ENCODE measurements at regions of chr2 and their contacts with region 1.

Region 1: DNA sequence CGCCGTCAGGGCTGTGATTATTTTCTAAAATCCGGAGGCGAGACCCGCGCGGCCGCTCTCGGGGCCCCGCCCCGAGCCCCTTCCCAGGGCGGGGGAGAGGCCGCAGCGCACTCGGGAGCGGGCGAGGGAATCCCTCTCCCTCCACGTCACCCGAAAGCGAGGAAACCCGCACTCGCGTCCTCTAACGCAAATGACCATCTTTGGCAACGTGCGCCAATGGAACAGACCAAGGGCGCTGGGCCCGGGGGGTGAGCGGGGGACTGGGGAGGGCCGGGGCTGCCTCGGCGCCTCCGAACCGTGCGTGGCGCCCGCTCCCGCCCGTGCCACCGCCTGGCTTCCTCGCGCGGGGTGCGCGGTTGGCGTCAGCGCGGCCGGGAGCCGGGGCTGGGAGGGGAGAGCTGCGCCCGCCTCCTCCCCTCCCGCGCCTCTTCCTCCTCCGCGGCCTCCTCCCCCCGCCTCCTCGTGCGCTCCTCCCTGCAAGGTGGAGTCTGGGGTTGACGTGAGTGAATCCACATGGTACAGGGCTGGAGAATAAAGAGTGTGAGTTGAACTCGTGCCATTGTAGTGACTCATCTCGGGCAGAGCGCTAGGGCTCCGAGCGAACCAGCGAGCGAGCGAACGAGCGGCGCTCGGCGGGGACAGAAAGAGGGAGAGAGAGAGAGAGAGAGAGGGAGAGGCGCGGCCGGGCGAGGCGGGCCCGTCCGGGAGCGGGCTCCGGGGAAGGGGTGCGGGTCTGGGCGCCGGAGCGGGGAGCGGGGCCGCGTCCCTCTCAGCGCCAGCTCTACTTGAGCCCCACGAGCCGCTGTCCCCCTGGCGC is at the start of gene FOSL2:
- DNase-seq: peak; percentile 100
- ATAC-seq: peak; percentile 62
- H3K4me3 ChIP-seq: peak within 1 kb of the TSS; percentile 91
- H3K27ac ChIP-seq: peak within 1 kb of the TSS; percentile 93
- H3K4me1 ChIP-seq: peaks cover 12% of the 10 kb centered on the region
- H3K27me3 ChIP-seq: no peaks in the 10 kb centered on the region
- CTCF ChIP-seq: 0 out of 2 replicates have a peak, but pooled peaks have one; percentile 5
- POLR2A ChIP-seq: peak; percentile 41; the same call in 1 of the 2 replicates
- RAD21 ChIP-seq: peak; percentile 30
- total RNA-seq, gene FOSL2: 31.4 and 32.2 TPM in 2 replicates

Region 2: DNA sequence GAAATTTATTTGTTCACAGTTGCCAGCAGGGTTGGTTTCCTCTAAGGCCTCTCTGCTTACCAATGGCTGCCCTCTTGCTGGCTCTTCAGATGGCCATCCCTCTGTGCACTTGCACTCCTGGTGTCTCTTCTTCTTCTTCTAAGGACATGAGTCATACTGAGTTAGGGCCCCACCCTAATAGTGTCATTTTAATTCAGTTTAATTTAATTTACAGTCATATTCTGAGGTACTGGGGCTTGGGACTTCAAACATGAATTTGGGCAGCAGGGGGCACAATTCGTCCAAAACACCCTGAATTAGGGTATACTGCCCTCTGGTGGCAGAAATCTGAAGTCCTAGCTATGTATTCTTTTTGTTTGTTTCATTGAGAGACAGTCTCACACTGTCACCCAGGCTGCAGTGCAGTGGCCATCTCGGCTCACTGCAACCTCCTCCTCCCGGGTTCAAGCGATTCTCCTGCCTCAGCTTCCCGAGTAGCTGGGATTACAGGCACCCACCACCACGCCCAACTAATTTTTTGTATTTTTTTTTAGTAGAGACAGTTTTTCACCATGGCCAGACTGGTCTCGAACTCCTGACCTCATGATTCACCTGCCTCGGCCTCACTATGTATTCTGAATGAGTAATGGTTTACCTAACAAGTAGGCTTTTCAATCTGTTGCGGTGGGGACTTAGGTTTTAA is 709.0 kb before region 1 on chr2:
- CTCF ChIA-PET with region 1: no interaction called
- POLR2A ChIA-PET with region 1: no interaction called
- dilution Hi-C with region 1: no loop called
- in situ Hi-C with region 1: no loop called
- intact Hi-C with region 1: loop called (anchors 1 kb)
- DNase-seq: peak; percentile 90
- ATAC-seq: peak; percentile 69
- H3K4me3 ChIP-seq: no peak overlapping the region
- H3K27ac ChIP-seq: peak overlapping the region; percentile 52; the same call in 1 of the 2 replicates
- H3K4me1 ChIP-seq: peaks cover 10% of the 10 kb centered on the region
- H3K27me3 ChIP-seq: no peaks in the 10 kb centered on the region
- CTCF ChIP-seq: peak; percentile 99
- POLR2A ChIP-seq: no peak
- RAD21 ChIP-seq: peak; percentile 75

Region 3: DNA sequence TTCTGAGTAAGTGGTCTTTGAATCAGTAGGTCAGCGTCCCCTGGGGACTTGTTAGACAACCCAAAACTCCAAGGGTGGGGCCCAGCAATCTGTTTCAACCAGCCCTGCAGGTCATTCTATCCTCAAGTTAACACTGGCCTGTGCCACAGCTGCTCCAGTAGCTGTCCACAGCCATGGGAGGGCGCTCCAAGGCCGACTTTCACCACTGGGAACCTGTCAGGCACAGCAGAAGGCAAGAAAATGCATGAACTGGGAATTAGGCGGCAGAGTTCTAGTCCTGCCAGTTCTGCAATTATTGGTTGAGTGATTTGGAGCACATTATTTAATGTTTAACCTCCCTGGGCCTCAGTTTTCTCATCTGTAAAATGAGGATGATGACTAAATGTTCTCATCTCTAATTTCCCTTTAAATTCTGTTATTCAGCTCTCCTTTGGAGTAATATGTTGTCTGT is 638.3 kb before region 1 on chr2:
- CTCF ChIA-PET with region 1: no interaction called
- POLR2A ChIA-PET with region 1: no interaction called
- dilution Hi-C with region 1: no loop called
- in situ Hi-C with region 1: loop called (anchors 5 kb)
- intact Hi-C with region 1: loop called (anchors 1 kb)
- DNase-seq: peak; percentile 80
- ATAC-seq: peak; percentile 99
- H3K4me3 ChIP-seq: no peak overlapping the region
- H3K27ac ChIP-seq: no peak overlapping the region
- H3K4me1 ChIP-seq: peaks cover 5% of the 10 kb centered on the region
- H3K27me3 ChIP-seq: no peaks in the 10 kb centered on the region
- CTCF ChIP-seq: peak; percentile 96
- POLR2A ChIP-seq: peak; percentile 61
- RAD21 ChIP-seq: peak; percentile 99

Region 4: GRCh38 chr2:27890146-27890923 is 502.2 kb before region 1 on chr2 and contains the starts of genes BABAM2 and RBKS:
- CTCF ChIA-PET with region 1: no interaction called
- POLR2A ChIA-PET with region 1: no interaction called
- dilution Hi-C with region 1: no loop called
- in situ Hi-C with region 1: no loop called
- intact Hi-C with region 1: loop called (anchors 1 kb)
- DNase-seq: peak; percentile 78
- ATAC-seq: peak; percentile 93
- H3K4me3 ChIP-seq: peak within 1 kb of the TSS; percentile 85
- H3K27ac ChIP-seq: peak within 1 kb of the TSS; percentile 98
- H3K4me1 ChIP-seq: peaks cover 3% of the 10 kb centered on the region; the same call in 1 of the 2 replicates
- H3K27me3 ChIP-seq: no peaks in the 10 kb centered on the region
- CTCF ChIP-seq: no peak
- POLR2A ChIP-seq: peak; percentile 59; the same call in 1 of the 2 replicates
- RAD21 ChIP-seq: peak; percentile 34
- total RNA-seq, gene BABAM2: 16.7 and 23.1 TPM in 2 replicates
- total RNA-seq, gene RBKS: 0.83 and 1.1 TPM in 2 replicates

Region 5: DNA sequence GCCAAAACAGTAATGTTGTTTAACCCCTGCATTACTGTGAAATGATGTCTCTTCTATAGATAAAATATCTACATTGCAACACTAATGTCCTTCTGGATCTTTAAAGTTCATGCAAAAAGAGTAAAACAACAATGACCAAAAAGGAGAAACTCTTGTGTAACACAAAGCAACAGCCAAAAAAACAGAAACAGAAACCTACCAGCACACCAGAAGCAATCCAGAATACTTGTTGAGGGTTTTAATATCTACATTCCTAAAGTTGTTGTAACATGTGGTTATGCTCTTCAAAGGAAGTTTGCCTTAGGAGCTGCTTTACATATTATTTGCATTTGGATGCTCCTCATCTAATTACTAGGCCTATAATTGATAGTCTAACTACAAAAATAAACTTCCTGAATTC is 344.8 kb before region 1 on chr2:
- CTCF ChIA-PET with region 1: no interaction called
- POLR2A ChIA-PET with region 1: no interaction called
- dilution Hi-C with region 1: no loop called
- in situ Hi-C with region 1: no loop called
- intact Hi-C with region 1: loop called (anchors 2 kb)
- DNase-seq: peak; percentile 81
- ATAC-seq: peak; percentile 63
- H3K4me3 ChIP-seq: no peak overlapping the region
- H3K27ac ChIP-seq: peak overlapping the region; percentile 42; the same call in 1 of the 2 replicates
- H3K4me1 ChIP-seq: peaks cover 10% of the 10 kb centered on the region
- H3K27me3 ChIP-seq: no peaks in the 10 kb centered on the region
- CTCF ChIP-seq: no peak
- POLR2A ChIP-seq: no peak
- RAD21 ChIP-seq: no peak

Region 6: DNA sequence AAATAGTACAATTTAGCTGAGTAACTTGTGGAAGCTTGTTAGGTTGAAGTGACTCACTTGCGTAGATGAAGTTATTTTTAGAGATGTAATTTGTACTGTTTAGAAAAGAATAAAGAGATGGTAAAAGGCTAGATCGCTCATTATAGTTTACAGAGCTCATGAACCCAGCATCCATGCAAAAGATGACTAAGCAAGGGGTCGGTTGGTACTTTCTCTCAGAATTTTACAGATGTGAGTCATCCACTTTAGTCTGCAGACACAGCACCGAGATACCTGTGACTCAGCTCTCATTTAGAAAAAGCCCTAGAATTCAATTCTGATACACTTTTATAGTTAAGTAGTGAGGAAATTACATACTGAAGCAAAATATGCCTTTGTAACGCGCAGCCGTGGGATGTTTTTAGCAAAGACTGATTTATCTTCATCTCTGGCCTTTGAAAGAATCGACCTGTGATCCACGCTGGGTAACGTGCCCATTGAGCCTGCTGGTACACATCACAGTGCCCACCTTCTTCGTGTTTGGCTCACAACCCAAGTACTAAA is 116.4 kb before region 1 on chr2:
- CTCF ChIA-PET with region 1: no interaction called
- POLR2A ChIA-PET with region 1: interaction called, 4 read pairs
- dilution Hi-C with region 1: no loop called
- in situ Hi-C with region 1: no loop called
- intact Hi-C with region 1: loop called (anchors 2 kb)
- DNase-seq: peak; percentile 100
- ATAC-seq: peak; percentile 90
- H3K4me3 ChIP-seq: no peak overlapping the region
- H3K27ac ChIP-seq: peak overlapping the region; percentile 89
- H3K4me1 ChIP-seq: peaks cover 20% of the 10 kb centered on the region
- H3K27me3 ChIP-seq: no peaks in the 10 kb centered on the region
- CTCF ChIP-seq: no peak
- POLR2A ChIP-seq: no peak
- RAD21 ChIP-seq: peak; percentile 36

Region 7: DNA sequence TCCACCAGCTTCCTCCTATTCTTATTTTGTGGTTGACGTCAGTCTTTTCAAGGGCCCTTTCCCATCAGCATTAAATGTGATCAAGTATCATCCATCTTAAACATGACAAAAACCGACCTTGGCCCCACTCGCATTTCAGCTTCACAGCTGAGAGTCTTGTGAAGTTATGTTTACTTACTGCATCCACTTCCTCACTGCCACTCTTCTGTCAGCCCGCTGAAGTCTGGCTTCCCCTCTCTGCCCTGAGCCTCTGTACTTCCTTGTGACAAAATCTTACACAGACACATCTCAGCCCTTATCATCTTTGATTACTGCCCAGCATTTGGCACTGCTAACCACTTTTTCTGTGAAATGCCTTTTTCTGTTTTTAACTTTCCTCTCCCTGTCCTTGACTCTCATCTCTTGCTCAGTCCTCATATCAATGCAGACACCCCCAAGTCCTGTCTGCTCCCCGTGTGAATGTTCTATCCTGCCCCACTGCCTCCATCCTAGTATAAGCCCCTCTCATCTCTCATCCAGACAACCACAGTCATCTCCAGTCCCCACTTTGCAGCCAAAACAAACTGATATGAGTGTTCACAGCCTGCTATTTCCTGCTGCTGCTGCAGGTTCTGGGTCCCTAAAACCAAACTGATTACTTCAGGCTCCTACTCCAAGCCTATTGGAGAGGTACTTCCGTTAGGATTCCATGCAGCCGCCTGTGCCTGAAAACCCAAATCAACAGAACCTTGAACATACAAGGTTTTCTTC is 31.5 kb after region 1 on chr2:
- CTCF ChIA-PET with region 1: no interaction called
- POLR2A ChIA-PET with region 1: no interaction called
- dilution Hi-C with region 1: no loop called
- in situ Hi-C with region 1: no loop called
- intact Hi-C with region 1: no loop called
- DNase-seq: peak; percentile 44
- ATAC-seq: peak; percentile 28
- H3K4me3 ChIP-seq: no peak overlapping the region
- H3K27ac ChIP-seq: no peak overlapping the region
- H3K4me1 ChIP-seq: peaks cover 18% of the 10 kb centered on the region
- H3K27me3 ChIP-seq: no peaks in the 10 kb centered on the region
- CTCF ChIP-seq: no peak
- POLR2A ChIP-seq: no peak
- RAD21 ChIP-seq: no peak

Region 8: DNA sequence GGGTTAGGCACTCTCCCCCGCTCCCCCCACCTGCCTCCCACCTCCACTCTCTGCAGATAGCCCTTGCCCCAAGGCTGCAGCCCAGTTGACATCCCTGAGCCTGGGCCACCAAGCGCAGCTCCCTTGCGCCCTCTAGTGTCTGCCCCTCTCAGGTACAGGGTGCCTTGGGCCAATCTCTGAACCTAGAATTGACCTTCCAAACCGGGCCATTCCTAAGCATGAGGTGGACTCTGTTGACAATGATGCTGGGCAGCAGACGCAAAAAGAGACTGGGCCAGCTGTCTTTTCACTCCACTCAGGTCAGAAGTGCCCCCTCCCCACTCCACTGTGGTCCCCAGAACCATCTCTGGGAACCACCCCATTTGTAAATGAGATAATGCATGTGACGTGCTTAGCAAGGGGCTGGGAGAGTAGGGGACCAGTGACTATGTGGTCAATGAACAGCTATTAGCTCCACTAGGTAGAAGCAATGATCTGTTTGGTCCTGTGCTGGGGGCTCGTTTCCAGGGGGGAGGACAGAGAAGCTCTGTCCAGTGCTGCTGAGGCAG is 60.1 kb after region 1 on chr2:
- CTCF ChIA-PET with region 1: interaction called, 3 read pairs
- POLR2A ChIA-PET with region 1: no interaction called
- dilution Hi-C with region 1: no loop called
- in situ Hi-C with region 1: no loop called
- intact Hi-C with region 1: loop called (anchors 2 kb)
- DNase-seq: peak; percentile 27
- ATAC-seq: peak; percentile 84
- H3K4me3 ChIP-seq: no peak overlapping the region
- H3K27ac ChIP-seq: no peak overlapping the region
- H3K4me1 ChIP-seq: peaks cover 19% of the 10 kb centered on the region
- H3K27me3 ChIP-seq: no peaks in the 10 kb centered on the region
- CTCF ChIP-seq: peak; percentile 90
- POLR2A ChIP-seq: no peak
- RAD21 ChIP-seq: peak; percentile 92

Region 9: GRCh38 chr2:28976584-28976983 is 584.1 kb after region 1 on chr2:
- CTCF ChIA-PET with region 1: no interaction called
- POLR2A ChIA-PET with region 1: no interaction called
- dilution Hi-C with region 1: no loop called
- in situ Hi-C with region 1: no loop called
- intact Hi-C with region 1: no loop called
- DNase-seq: peak; percentile 84
- ATAC-seq: peak; percentile 44
- H3K4me3 ChIP-seq: no peak overlapping the region
- H3K27ac ChIP-seq: no peak overlapping the region
- H3K4me1 ChIP-seq: peaks cover 11% of the 10 kb centered on the region
- H3K27me3 ChIP-seq: peaks cover 6% of the 10 kb centered on the region
- CTCF ChIP-seq: no peak
- POLR2A ChIP-seq: no peak
- RAD21 ChIP-seq: no peak

Measured in IMR-90 (cell line).